A673 (cell line): ENCODE measurements at regions of chr13 and their contacts with region 1.

Region 1: DNA sequence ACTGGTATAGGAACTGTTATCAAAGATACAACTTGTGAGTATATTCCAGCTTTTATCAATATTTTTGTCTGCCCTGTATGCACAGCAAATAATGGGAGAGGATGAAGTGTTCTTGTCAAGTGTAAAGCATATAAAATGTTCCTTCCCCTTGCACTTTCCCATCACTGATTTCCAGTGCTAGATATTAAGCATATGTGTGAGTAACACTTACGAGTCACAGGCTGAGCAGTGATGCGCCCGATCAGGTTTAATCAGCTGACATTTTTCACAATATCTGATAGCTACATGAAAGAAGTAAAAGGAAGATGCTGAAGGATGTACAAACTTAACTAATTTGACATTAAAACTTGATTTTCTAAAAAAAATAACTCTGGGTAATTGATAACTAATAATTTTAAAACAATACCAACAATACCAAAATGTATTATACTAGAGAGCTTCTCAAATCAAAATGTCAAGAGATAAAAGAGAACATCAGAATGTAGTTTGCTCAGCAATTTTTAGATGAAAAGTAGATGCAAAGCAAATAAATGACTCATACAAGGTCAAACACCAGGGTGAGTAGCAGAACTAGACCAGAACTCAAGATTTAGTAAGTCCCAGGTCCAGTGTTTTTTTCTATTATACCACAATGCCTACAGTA is 56.4 kb downstream of the ZDHHC20 start:
- DNase-seq: peak; percentile 23
- H3K4me3 ChIP-seq: no peak overlapping the region
- H3K27ac ChIP-seq: no peak overlapping the region
- H3K4me1 ChIP-seq: peaks cover 46% of the 10 kb centered on the region
- H3K27me3 ChIP-seq: no peaks in the 10 kb centered on the region
- CTCF ChIP-seq: no peak

Region 2: GRCh38 chr13:21458813-21459701 is 56.4 kb after region 1 on chr13 and contains the start of gene ZDHHC20:
- CTCF ChIA-PET with region 1: no interaction called
- POLR2A ChIA-PET with region 1: no interaction called
- intact Hi-C with region 1: loop called (anchors 5 kb)
- DNase-seq: peak; percentile 89
- H3K4me3 ChIP-seq: peak within 1 kb of the TSS; percentile 80
- H3K27ac ChIP-seq: peak within 1 kb of the TSS; percentile 83
- H3K4me1 ChIP-seq: no peaks in the 10 kb centered on the region
- H3K27me3 ChIP-seq: no peaks in the 10 kb centered on the region
- CTCF ChIP-seq: no peak
- total RNA-seq, gene ZDHHC20: 98.9 and 110 TPM in 2 replicates

Region 3: DNA sequence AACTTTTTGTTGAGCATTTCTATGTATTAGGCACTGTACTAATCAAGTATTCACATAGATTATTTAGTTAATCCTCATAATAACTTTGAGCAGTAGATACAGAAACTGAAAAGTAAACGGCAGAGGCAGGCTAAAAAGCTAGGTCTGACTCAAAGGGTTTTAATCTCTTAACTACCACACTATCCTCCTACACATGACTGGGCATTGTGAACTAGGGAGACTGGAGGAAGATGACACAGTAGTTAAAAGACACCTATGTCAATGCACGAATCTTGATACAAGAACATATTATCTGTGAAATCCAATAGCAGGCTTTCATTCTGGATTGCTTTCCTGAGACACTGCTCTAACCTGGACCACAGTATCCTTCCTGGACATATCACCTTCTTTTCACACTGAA is 165.0 kb after region 1 on chr13:
- CTCF ChIA-PET with region 1: no interaction called
- POLR2A ChIA-PET with region 1: no interaction called
- intact Hi-C with region 1: no loop called
- DNase-seq: peak; percentile 51
- H3K4me3 ChIP-seq: no peak overlapping the region
- H3K27ac ChIP-seq: no peak overlapping the region
- H3K4me1 ChIP-seq: peaks cover 12% of the 10 kb centered on the region
- H3K27me3 ChIP-seq: no peaks in the 10 kb centered on the region
- CTCF ChIP-seq: no peak